ENCODE measurements at regions of chr20 and their contacts with region 1.

Region 1: DNA sequence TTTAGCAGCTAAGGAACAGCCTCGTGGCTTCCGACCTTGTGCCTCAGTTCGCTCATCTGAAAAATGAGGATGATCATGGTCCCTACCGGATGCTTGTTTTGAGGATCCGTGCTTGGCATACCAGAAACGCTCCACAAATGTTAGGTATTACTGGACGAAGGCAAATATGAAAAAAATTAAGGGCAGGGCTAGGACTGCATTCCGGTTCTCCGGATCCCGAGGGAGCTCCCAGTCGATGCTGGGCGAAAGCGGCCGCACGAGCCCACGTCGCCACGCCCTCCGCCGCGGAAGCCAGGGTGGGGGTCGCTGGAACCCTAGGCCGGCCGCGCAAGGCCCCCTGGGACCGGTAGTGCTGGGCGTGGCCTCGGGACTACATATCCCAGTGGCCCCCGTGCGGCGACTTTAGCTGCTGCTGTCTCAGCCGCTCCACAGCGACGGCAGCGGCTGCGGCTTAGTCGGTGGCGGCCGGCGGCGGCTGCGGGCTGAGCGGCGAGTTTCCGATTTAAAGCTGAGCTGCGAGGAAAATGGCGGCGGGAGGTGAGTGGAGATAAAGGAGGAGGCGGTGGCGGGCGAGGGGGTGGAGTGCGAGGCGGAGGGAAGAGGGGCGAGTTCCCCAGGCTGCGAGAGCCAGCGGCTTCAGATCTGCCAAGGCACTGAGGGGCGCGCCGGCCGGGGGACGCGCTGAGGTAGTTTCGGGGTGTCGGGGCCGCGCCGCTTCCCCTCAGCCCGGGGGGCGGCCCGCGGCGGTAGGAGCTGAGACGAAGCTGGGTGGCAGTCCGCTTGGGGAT is at the start of gene NCOA3:
- DNase-seq: peak; percentile 97 to 98 (median 98)
- ATAC-seq: peak; percentile 96
- H3K4me3 ChIP-seq: peak within 1 kb of the TSS; percentile 98
- H3K27ac ChIP-seq: peak within 1 kb of the TSS; percentile 82
- H3K4me1 ChIP-seq: peaks cover 6 to 8% of the 10 kb centered on the region in 2 experiments; a peak in 3 of 5 replicates
- H3K27me3 ChIP-seq: no peaks in the 10 kb centered on the region
- CTCF ChIP-seq: peak; percentile 26 to 44 (median 33); a peak in 3 of 6 replicates
- EP300 ChIP-seq: peak; percentile 32
- POLR2A ChIP-seq: peak; percentile 96
- RAD21 ChIP-seq: peak; percentile 33 to 34; a peak in 3 of 4 replicates
- polyA plus RNA-seq, gene NCOA3: 3.2 to 4.7 TPM

Region 2: DNA sequence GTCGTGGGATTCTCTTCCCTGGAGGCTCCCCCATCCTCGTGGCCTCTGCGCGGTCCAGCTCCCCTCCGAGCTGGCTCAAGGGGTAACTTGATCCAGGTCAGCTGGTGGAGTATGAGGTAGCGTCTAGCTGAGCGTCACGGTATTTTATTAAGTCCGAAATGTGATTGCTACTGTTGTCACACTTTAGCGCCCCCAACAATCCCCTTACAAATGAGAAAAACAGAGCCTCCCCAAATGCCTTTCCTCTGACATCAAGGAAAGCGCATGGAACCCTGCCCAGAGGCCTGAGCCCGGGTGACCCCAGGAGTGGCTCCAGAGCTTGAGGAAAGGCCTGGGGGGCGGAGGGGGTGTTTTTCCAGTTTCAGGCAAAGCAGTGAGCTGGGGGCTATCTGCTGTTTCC is 337.5 kb before region 1 on chr20:
- CTCF ChIA-PET with region 1: no interaction called
- POLR2A ChIA-PET with region 1: no interaction called
- in situ Hi-C with region 1: no loop called
- intact Hi-C with region 1: no loop called
- DNase-seq: no peak
- ATAC-seq: no peak
- H3K4me3 ChIP-seq: no peak overlapping the region
- H3K27ac ChIP-seq: no peak overlapping the region
- H3K4me1 ChIP-seq: no peaks in the 10 kb centered on the region; a peak in 1 of 5 replicates
- H3K27me3 ChIP-seq: peaks cover 37 to 59% of the 10 kb centered on the region in 2 experiments
- CTCF ChIP-seq: no peak
- EP300 ChIP-seq: no peak
- POLR2A ChIP-seq: no peak
- RAD21 ChIP-seq: no peak

Region 3: DNA sequence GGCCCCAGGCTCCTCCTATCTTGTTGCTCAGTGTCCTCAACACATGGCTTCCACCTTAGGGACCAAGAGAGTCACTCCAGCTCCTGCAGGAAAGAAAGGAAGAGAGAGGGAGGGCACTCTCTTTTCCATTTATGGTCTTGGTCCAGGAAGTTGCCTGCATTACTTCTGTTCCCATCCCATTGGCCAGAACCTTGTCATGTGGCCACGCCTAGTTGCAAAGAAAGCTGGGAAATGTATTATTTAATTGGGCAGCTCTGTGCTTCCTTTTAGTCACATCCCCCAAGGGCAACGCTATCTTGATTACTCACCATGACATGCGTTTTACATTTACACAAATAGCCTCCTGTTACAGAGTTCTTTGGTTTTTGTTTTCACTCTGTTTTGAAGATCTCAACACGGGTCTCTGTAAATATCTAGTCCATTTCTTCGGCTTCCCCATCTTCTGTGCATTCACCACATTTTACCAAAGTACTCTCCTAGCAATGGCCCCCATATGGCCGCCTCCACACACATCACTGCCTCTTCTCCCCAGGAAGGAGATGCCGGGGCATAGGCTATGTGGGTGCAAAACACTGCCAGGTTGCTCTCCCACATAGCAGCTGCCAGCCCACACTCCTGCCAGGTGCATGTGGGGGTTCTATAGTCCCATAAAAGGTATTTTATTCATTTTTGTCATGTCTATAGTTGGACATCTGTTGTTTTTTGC is 109.5 kb before region 1 on chr20:
- CTCF ChIA-PET with region 1: no interaction called
- POLR2A ChIA-PET with region 1: interaction called, 10 read pairs
- in situ Hi-C with region 1: no loop called
- intact Hi-C with region 1: no loop called
- DNase-seq: peak; percentile 71 to 92 (median 80)
- ATAC-seq: peak; percentile 98
- H3K4me3 ChIP-seq: no peak overlapping the region
- H3K27ac ChIP-seq: peak overlapping the region; percentile 95
- H3K4me1 ChIP-seq: peaks cover 8 to 24% of the 10 kb centered on the region in 2 experiments; a peak in 4 of 5 replicates
- H3K27me3 ChIP-seq: no peaks in the 10 kb centered on the region
- CTCF ChIP-seq: no peak
- EP300 ChIP-seq: peak; percentile 71; the same call in 1 of the 2 replicates
- POLR2A ChIP-seq: peak; percentile 69; the same call in 1 of the 2 replicates
- RAD21 ChIP-seq: no peak

Region 4: GRCh38 chr20:47515843-47516242 is 14.2 kb after region 1 on chr20:
- CTCF ChIA-PET with region 1: no interaction called
- POLR2A ChIA-PET with region 1: interaction called, 43 read pairs
- in situ Hi-C with region 1: no loop called
- intact Hi-C with region 1: no loop called
- DNase-seq: no peak
- ATAC-seq: no peak
- H3K4me3 ChIP-seq: no peak overlapping the region
- H3K27ac ChIP-seq: no peak overlapping the region
- H3K4me1 ChIP-seq: 0 out of 5 replicates have a peak, but pooled peaks cover 0 to 3% of the 10 kb centered on the region in 2 experiments
- H3K27me3 ChIP-seq: no peaks in the 10 kb centered on the region
- CTCF ChIP-seq: no peak
- EP300 ChIP-seq: no peak
- POLR2A ChIP-seq: no peak
- RAD21 ChIP-seq: no peak

Region 5: DNA sequence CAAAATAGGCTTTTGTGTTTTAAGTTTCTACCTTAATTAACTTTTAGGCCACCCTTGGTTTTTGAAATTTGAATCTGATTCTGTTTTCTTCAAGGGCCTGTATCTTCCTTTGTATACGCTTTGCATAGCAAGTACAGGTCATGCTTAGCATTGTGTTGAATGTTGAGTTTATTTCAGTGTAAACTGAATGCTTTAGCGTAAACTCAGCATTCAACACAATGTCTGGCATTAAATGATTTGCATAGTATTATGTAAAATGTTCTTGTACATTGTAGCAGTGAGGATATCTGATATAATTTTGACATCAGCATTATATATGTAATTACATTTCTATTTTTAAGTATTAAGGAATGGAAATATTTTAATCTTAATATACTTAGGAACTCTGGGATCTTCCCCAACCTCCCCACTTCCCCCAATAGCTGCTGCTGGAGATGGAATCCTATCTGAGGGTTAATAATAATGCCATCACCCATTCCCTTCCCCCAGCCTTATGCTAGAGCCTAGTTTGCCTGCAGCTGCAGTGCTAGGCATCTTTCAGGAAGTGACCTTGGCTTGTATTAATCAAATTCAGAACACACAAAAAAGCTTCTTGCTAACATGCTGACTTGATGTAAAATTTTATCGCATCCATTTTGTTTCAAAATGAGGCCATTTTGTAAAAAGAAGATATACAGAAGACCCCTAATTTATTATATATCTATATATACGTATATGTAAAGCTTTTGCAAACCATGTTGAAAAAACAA is 73.1 kb after region 1 on chr20:
- CTCF ChIA-PET with region 1: no interaction called
- POLR2A ChIA-PET with region 1: interaction called, 4 read pairs
- in situ Hi-C with region 1: no loop called
- intact Hi-C with region 1: loop called (anchors 2 kb)
- DNase-seq: peak in 2 of 4 experiments; percentile 27 to 57
- ATAC-seq: peak; percentile 49
- H3K4me3 ChIP-seq: no peak overlapping the region
- H3K27ac ChIP-seq: peak overlapping the region; percentile 83; the same call in 2 of the 3 replicates
- H3K4me1 ChIP-seq: peaks cover 2 to 33% of the 10 kb centered on the region in 2 experiments; a peak in 4 of 5 replicates
- H3K27me3 ChIP-seq: no peaks in the 10 kb centered on the region
- CTCF ChIP-seq: no peak
- EP300 ChIP-seq: no peak
- POLR2A ChIP-seq: no peak
- RAD21 ChIP-seq: no peak

Region 6: DNA sequence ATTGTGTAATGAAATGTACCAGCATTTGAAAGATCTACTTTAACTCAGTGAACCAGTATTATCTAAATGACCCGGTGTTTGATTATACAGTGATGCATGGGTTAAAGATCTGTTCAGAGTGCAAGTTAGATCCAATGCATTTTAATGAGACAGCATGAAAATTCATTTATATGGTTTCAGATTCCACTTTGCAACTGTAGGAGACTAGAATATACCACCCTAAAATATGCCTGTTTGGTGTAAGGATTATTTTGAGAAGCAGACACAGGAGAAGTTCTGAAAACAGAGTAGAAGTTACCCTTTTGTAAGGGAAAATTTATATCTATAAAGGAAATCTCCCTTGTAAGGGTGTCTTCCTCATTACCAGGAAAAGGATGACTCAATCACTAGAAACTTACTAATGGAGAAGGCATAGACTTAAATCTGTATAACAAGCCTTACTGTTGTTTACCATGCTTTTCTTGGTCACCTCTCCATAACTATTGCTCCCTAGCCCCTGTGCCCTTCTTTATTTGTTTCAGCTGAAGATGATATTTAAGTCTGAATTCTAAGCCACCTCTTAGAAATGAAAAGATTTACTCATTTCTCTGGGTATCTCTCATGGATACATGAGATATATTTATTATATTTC is 105.4 kb after region 1 on chr20:
- CTCF ChIA-PET with region 1: no interaction called
- POLR2A ChIA-PET with region 1: interaction called, 12 read pairs
- in situ Hi-C with region 1: no loop called
- intact Hi-C with region 1: no loop called
- DNase-seq: peak in 3 of 4 experiments; percentile 13 to 68 (median 66)
- ATAC-seq: peak; percentile 75
- H3K4me3 ChIP-seq: no peak overlapping the region
- H3K27ac ChIP-seq: peak overlapping the region; percentile 86
- H3K4me1 ChIP-seq: peaks cover 6 to 47% of the 10 kb centered on the region in 2 experiments
- H3K27me3 ChIP-seq: no peaks in the 10 kb centered on the region
- CTCF ChIP-seq: no peak
- EP300 ChIP-seq: peak; percentile 96
- POLR2A ChIP-seq: peak; percentile 24; the same call in 1 of the 2 replicates
- RAD21 ChIP-seq: peak in 1 of 2 experiments; percentile 21; a peak in 1 of 4 replicates

Measured in K562 (cell line).